ENCODE measurements at regions of chr3 and their contacts with region 1.

Region 1: GRCh38 chr3:133874344-133874743 is 21.3 kb downstream of the RAB6B start:
- DNase-seq: no peak
- ATAC-seq: no peak
- H3K4me3 ChIP-seq: no peak overlapping the region
- H3K4me3 Mint-ChIP-seq: no peak overlapping the region
- H3K27ac ChIP-seq: no peak overlapping the region
- H3K27ac Mint-ChIP-seq: no peak overlapping the region
- H3K4me1 ChIP-seq: no peaks in the 10 kb centered on the region
- H3K4me1 Mint-ChIP-seq: no peaks in the 10 kb centered on the region
- H3K27me3 ChIP-seq: no peaks in the 10 kb centered on the region
- H3K27me3 Mint-ChIP-seq: peaks cover 12% of the 10 kb centered on the region
- CTCF ChIP-seq: no peak

Region 2: GRCh38 chr3:133159498-133160475 is 714.6 kb before region 1 on chr3:
- CTCF ChIA-PET with region 1: no interaction called
- POLR2A ChIA-PET with region 1: no interaction called
- intact Hi-C with region 1: no loop called
- DNase-seq: no peak
- ATAC-seq: no peak
- H3K4me3 ChIP-seq: no peak overlapping the region
- H3K4me3 Mint-ChIP-seq: no peak overlapping the region
- H3K27ac ChIP-seq: no peak overlapping the region
- H3K27ac Mint-ChIP-seq: no peak overlapping the region
- H3K4me1 ChIP-seq: no peaks in the 10 kb centered on the region
- H3K4me1 Mint-ChIP-seq: no peaks in the 10 kb centered on the region
- H3K27me3 ChIP-seq: no peaks in the 10 kb centered on the region
- H3K27me3 Mint-ChIP-seq: peaks cover 21% of the 10 kb centered on the region
- CTCF ChIP-seq: no peak

Region 3: GRCh38 chr3:133750259-133750656 is 124.1 kb before region 1 on chr3:
- CTCF ChIA-PET with region 1: no interaction called
- POLR2A ChIA-PET with region 1: no interaction called
- intact Hi-C with region 1: loop called in 1 of 2 experiments (anchors 10 kb)
- DNase-seq: no peak
- ATAC-seq: no peak
- H3K4me3 ChIP-seq: no peak overlapping the region
- H3K4me3 Mint-ChIP-seq: no peak overlapping the region
- H3K27ac ChIP-seq: no peak overlapping the region
- H3K27ac Mint-ChIP-seq: no peak overlapping the region
- H3K4me1 ChIP-seq: peaks cover 4% of the 10 kb centered on the region
- H3K4me1 Mint-ChIP-seq: no peaks in the 10 kb centered on the region
- H3K27me3 ChIP-seq: peaks cover 20 to 21% of the 10 kb centered on the region in 2 experiments
- H3K27me3 Mint-ChIP-seq: peaks cover 47% of the 10 kb centered on the region
- CTCF ChIP-seq: no peak

Region 4: DNA sequence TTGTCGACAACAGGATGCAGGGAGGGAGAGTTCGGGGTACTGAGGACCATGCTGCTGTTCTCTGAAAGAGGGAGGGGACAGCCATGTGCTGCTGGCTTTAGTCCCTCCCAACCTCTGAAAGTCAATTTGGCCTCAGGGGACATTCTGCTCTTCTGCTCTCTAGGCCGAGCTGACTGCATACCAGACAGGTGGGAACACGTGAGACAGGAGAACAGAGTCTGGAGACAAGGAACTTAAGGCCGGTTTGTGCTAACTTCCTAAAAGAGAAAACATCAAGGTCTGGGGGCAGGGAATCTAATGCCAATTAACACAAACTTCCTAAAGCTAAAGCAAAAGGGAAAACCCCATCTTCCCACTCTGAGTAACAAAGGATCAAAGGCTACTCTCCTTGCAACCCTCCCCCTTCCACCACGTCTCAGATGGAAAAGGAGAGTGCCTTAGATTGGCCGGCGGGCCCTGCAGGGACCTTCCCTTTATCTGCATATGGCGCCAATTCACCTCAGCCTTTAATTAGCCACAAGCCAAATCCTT is 114.4 kb after region 1 on chr3:
- CTCF ChIA-PET with region 1: no interaction called
- POLR2A ChIA-PET with region 1: no interaction called
- intact Hi-C with region 1: no loop called
- DNase-seq: no peak
- ATAC-seq: no peak
- H3K4me3 ChIP-seq: no peak overlapping the region
- H3K4me3 Mint-ChIP-seq: no peak overlapping the region
- H3K27ac ChIP-seq: no peak overlapping the region
- H3K27ac Mint-ChIP-seq: no peak overlapping the region
- H3K4me1 ChIP-seq: no peaks in the 10 kb centered on the region
- H3K4me1 Mint-ChIP-seq: no peaks in the 10 kb centered on the region
- H3K27me3 ChIP-seq: peaks cover 3 to 4% of the 10 kb centered on the region in 2 experiments
- H3K27me3 Mint-ChIP-seq: no peaks in the 10 kb centered on the region
- CTCF ChIP-seq: no peak

Region 5: DNA sequence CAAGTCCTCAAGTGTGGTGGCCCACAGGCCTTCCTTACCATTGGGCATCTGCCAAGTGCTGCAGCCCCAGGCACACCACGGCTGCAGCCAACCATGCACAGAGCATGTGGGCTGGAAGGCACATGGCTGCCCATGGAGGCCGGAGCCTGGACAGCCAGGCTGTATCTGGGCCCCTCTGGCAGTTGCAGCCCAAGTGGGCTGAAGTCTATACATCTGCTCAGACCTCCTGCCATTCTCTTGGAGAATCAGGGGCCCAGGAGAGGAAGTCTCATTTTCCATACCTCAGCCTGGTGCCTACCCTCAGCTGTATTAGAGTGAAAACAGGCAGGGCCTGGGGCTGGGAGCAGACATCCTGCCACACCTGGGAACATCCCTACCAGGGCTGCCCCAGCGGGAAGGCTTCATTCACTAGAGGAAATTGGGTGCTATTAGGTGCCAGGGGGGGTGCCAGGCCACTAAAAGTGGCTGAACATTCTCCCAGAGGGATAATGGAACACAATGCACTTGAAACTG is 203.4 kb after region 1 on chr3:
- CTCF ChIA-PET with region 1: no interaction called
- POLR2A ChIA-PET with region 1: no interaction called
- intact Hi-C with region 1: no loop called
- DNase-seq: no peak
- ATAC-seq: no peak
- H3K4me3 ChIP-seq: no peak overlapping the region
- H3K4me3 Mint-ChIP-seq: no peak overlapping the region
- H3K27ac ChIP-seq: no peak overlapping the region
- H3K27ac Mint-ChIP-seq: no peak overlapping the region
- H3K4me1 ChIP-seq: no peaks in the 10 kb centered on the region
- H3K4me1 Mint-ChIP-seq: no peaks in the 10 kb centered on the region
- H3K27me3 ChIP-seq: peaks cover 0 to 4% of the 10 kb centered on the region in 2 experiments
- H3K27me3 Mint-ChIP-seq: peaks cover 8% of the 10 kb centered on the region
- CTCF ChIP-seq: no peak